ENCODE measurements at regions of chr4 and their contacts with region 1.

Region 1: GRCh38 chr4:38759113-38759789 is 23.5 kb downstream of the TLR10 start:
- DNase-seq: peak; percentile 76
- H3K4me3 Mint-ChIP-seq: no peak overlapping the region
- H3K27ac Mint-ChIP-seq: no peak overlapping the region
- H3K4me1 Mint-ChIP-seq: peaks cover 51% of the 10 kb centered on the region
- H3K27me3 Mint-ChIP-seq: no peaks in the 10 kb centered on the region

Region 2: DNA sequence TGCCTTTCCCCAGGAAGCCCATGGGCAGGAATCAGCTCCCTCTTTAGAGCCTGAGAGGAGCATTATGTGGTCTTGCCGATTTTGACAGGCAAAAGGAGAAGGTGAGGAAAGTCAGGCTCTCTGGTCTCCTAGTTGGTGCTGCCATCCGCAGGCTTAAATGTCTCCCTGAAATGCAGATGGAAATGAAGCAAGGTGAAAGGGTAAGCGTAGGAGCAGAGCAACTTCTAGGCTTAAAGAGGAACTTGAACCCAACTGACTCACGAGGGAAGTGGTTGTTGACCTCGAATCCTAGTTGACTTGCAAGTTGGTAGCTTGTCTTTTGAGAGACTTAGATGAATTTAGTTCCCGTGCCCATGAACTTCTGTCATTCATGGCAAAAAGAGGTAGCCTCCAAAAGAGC is 593.2 kb before region 1 on chr4:
- CTCF ChIA-PET with region 1: no interaction called
- DNase-seq: no peak
- H3K4me3 Mint-ChIP-seq: no peak overlapping the region
- H3K27ac Mint-ChIP-seq: no peak overlapping the region
- H3K4me1 Mint-ChIP-seq: peaks cover 40% of the 10 kb centered on the region
- H3K27me3 Mint-ChIP-seq: peaks cover 7% of the 10 kb centered on the region

Region 3: DNA sequence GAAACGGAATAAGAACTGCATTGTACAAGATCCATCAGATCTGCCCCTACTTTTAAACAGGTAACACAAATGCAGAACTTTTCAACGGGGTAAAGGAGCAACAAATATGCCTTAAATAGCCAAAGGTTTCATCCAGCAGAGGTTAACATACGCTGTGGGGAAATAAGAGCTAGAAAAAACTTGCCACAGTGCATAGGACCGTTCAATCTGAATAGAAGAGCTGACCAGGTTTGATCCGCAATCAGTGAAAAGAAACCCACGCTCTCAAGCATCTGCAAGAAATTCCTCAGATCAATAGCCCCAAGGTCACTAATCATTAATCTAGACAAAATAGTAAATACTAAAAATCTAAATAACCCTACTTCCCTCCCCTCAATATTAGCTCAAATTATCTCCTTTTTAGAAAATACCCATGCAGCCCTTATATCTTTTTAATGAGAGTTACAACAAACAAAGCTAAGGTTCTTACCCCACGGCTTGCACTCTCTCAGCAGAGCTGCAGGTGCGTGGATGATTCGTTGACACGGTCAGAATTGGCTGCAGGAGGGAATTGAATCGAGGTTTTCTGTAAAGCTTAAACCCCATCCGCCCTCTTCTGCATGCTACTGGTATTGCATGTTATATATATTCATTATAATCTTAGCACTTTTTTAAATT is 23.3 kb after region 1 on chr4 and contains the start of gene TLR10:
- CTCF ChIA-PET with region 1: interaction called, 89 read pairs
- DNase-seq: peak; percentile 49
- H3K4me3 Mint-ChIP-seq: no peak within 1 kb of the TSS
- H3K27ac Mint-ChIP-seq: no peak within 1 kb of the TSS
- H3K4me1 Mint-ChIP-seq: peaks cover 8% of the 10 kb centered on the region
- H3K27me3 Mint-ChIP-seq: no peaks in the 10 kb centered on the region

Region 4: GRCh38 chr4:38804654-38805295 is 45.5 kb after region 1 on chr4 and contains the start of gene TLR1:
- CTCF ChIA-PET with region 1: interaction called, 91 read pairs
- DNase-seq: peak; percentile 38
- H3K4me3 Mint-ChIP-seq: peak within 1 kb of the TSS; percentile 86
- H3K27ac Mint-ChIP-seq: peak within 1 kb of the TSS; percentile 99
- H3K4me1 Mint-ChIP-seq: peaks cover 46% of the 10 kb centered on the region
- H3K27me3 Mint-ChIP-seq: no peaks in the 10 kb centered on the region

Region 5: GRCh38 chr4:38889143-38889542 is 129.9 kb after region 1 on chr4:
- CTCF ChIA-PET with region 1: interaction called, 30 read pairs
- DNase-seq: no peak
- H3K4me3 Mint-ChIP-seq: peak overlapping the region; percentile 20
- H3K27ac Mint-ChIP-seq: peak overlapping the region; percentile 67
- H3K4me1 Mint-ChIP-seq: peaks cover 19% of the 10 kb centered on the region
- H3K27me3 Mint-ChIP-seq: peaks cover 3% of the 10 kb centered on the region

Region 6: DNA sequence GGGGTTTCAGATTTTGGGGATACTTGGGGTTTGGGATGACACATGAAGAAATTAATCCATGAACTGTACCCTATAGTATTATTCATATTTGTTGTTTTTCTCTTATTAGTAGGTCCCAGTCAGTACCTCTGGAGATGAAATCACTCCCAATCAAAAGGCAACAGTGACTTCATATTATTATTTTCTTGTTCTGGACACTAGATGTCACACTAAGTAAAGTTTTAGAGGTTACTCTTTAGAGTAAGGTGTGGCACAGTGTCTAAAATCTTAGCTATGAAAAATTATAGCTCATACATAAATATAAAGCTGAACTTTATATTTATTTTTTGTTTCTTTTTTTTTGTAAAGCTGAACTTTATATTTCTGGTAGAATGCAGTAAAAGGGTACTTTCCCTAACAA is 143.4 kb after region 1 on chr4:
- CTCF ChIA-PET with region 1: interaction called, 34 read pairs
- DNase-seq: no peak
- H3K4me3 Mint-ChIP-seq: no peak overlapping the region
- H3K27ac Mint-ChIP-seq: no peak overlapping the region
- H3K4me1 Mint-ChIP-seq: peaks cover 2% of the 10 kb centered on the region
- H3K27me3 Mint-ChIP-seq: peaks cover 15% of the 10 kb centered on the region

Measured in activated naive CD4-positive, alpha-beta T cell treated with anti-CD3 and anti-CD28 coated beads, Interleukin-2, amount 10 ng/mL, durations not matched to agents 7 days and 5 days (primary cell).